PC-3 (cell line): ENCODE measurements at regions of chr11 and their contacts with region 1.

Region 1: DNA sequence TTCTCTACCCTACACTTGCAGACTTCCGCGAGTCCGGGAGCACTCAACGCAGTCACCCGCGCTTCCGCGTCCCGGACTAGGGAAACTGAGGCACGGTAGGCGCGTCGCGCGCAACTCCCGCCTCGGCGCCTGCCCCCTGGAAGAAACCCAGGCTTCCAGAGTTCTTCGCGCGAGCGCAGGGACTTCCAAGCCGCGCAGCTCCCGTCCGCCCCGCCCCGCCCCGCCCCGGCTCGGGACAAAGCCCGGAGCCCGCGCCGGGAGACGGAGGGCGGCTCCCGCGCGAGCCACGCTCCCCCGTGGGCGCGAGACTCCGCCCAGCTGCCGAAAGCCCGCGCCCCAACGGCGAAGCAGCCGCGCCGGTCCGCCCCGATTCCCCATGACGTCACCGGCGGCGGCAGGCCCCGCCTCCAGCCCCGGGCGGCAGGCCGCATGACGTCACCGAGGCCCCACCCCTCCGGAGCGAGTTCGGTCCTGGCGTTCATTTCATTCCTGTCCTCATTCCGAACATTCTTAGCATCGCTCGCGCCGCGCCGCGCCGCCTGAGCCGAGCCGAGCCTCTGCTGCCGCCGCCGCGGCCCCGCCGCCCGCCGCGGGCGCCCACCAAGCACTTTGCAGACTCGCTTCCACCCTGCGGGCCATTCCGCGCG is at the start of gene TEAD1:
- DNase-seq: peak; percentile 93
- ATAC-seq: peak; percentile 80
- H3K4me3 ChIP-seq: peak within 1 kb of the TSS; percentile 97
- H3K27ac ChIP-seq: peak within 1 kb of the TSS; percentile 63
- H3K4me1 ChIP-seq: peaks cover 32% of the 10 kb centered on the region
- H3K27me3 ChIP-seq: no peaks in the 10 kb centered on the region
- CTCF ChIP-seq: no peak
- total RNA-seq, gene TEAD1: 70.2 and 148 TPM in 2 replicates

Region 2: GRCh38 chr11:12288212-12288930 is 385.7 kb before region 1 on chr11:
- CTCF ChIA-PET with region 1: no interaction called
- POLR2A ChIA-PET with region 1: no interaction called
- intact Hi-C with region 1: loop called (anchors 5 kb)
- DNase-seq: peak; percentile 94
- ATAC-seq: peak; percentile 23
- H3K4me3 ChIP-seq: peak overlapping the region; percentile 54
- H3K27ac ChIP-seq: peak overlapping the region; percentile 99
- H3K4me1 ChIP-seq: peaks cover 54% of the 10 kb centered on the region
- H3K27me3 ChIP-seq: no peaks in the 10 kb centered on the region
- CTCF ChIP-seq: peak; percentile 92

Region 3: DNA sequence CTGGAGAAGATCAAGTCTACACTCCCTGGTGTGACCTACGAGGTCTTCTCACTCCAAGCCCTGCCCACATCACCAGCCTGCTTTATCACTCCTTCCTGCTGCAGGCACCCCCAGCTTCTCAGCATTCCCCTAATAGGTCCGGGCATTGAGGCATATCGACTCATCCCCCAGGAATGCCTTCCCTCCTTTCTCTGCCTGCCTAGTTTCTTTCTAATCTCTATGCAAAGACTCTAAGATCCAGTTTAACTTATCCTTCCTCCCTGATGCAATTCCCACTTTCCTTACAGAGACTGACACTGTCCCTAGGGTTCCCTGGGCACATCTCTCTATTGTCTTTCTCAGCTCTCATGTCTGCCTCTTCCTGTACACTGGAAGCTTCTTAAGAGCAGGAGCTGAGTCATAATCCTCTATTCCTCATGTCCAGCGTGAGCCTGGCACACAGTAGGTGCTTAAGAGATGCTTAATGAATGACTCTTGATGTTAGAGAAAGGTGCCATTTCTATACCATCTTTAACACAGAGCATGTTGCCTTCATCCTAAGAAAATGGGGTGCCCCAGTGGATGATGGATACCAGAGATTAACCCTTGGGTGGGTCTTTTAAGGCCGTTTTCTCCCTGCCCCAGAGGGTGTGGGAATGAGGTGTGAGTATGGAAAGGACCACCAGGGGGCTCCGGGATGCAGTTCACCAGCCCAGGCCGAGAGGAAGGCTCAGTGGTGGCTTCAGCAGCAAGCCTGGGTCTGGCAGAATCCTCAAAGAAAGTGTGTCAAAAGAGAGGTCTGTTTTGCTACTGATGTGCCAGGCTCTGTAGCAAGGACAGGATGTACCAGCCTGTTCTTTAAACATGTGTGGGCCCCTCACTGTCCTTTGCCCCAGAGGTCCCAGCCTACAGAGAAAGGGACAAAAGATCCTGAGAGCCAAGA is 262.0 kb before region 1 on chr11:
- CTCF ChIA-PET with region 1: no interaction called
- POLR2A ChIA-PET with region 1: no interaction called
- intact Hi-C with region 1: loop called (anchors 5 kb)
- DNase-seq: peak; percentile 79
- ATAC-seq: peak; percentile 87
- H3K4me3 ChIP-seq: no peak overlapping the region
- H3K27ac ChIP-seq: peak overlapping the region; percentile 6
- H3K4me1 ChIP-seq: peaks cover 14% of the 10 kb centered on the region
- H3K27me3 ChIP-seq: no peaks in the 10 kb centered on the region
- CTCF ChIP-seq: peak; percentile 84

Region 4: GRCh38 chr11:12599408-12600143 is 74.5 kb before region 1 on chr11:
- CTCF ChIA-PET with region 1: no interaction called
- POLR2A ChIA-PET with region 1: interaction called, 6 read pairs
- intact Hi-C with region 1: loop called (anchors 5 kb)
- DNase-seq: peak; percentile 42
- ATAC-seq: peak; percentile 48
- H3K4me3 ChIP-seq: no peak overlapping the region
- H3K27ac ChIP-seq: no peak overlapping the region
- H3K4me1 ChIP-seq: peaks cover 12% of the 10 kb centered on the region; the same call in 1 of the 2 replicates
- H3K27me3 ChIP-seq: no peaks in the 10 kb centered on the region
- CTCF ChIP-seq: peak; percentile 88

Region 5: GRCh38 chr11:12662101-12662689 is 11.9 kb before region 1 on chr11:
- CTCF ChIA-PET with region 1: no interaction called
- POLR2A ChIA-PET with region 1: no interaction called
- intact Hi-C with region 1: no loop called
- DNase-seq: no peak
- ATAC-seq: no peak
- H3K4me3 ChIP-seq: no peak overlapping the region
- H3K27ac ChIP-seq: no peak overlapping the region
- H3K4me1 ChIP-seq: no peaks in the 10 kb centered on the region
- H3K27me3 ChIP-seq: no peaks in the 10 kb centered on the region
- CTCF ChIP-seq: no peak

Region 6: GRCh38 chr11:12693479-12694181 is 19.6 kb after region 1 on chr11:
- CTCF ChIA-PET with region 1: interaction called, 3 read pairs
- POLR2A ChIA-PET with region 1: interaction called, 6 read pairs
- intact Hi-C with region 1: loop called (anchors 1 kb)
- DNase-seq: peak; percentile 96
- ATAC-seq: peak; percentile 82
- H3K4me3 ChIP-seq: peak overlapping the region; percentile 58
- H3K27ac ChIP-seq: peak overlapping the region; percentile 99
- H3K4me1 ChIP-seq: peaks cover 83% of the 10 kb centered on the region
- H3K27me3 ChIP-seq: no peaks in the 10 kb centered on the region
- CTCF ChIP-seq: no peak

Region 7: DNA sequence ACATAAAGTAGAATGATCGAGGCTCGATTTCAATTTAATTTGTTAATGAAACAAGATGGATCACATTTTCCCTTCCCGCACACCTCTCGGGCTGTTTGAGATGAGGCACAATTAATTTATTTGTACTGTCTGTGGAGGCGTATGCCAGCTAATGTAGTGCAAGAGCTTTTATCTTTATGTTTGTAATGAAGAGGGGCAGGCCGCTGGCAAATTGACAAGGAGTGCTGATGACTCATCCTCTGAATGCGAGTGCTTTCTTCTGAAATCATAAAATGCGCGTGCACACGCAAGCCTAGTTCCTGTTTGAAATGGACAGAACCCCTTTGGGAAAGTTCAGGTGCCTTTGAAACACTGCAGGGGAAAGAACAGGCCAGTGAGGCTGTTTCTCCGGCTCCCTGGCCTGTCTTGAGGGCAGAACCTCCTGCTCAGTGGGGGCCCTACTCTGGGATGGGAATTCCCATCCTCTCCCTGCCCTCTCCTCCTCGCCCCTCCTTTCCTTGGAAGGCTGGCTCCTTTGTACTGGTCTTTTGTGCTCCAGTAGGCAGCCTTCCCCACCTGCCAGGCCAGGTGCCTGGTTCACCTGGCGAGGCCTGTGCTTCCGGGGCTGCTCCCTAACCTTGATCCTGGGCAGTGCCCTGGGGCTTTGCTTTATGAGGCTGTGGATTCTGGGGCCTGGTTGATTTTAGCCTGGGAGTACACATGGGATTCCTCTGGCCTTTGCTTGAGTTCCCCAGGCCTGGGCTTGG is 50.4 kb after region 1 on chr11:
- CTCF ChIA-PET with region 1: no interaction called
- POLR2A ChIA-PET with region 1: interaction called, 5 read pairs
- intact Hi-C with region 1: loop called (anchors 1 kb)
- DNase-seq: peak; percentile 96
- ATAC-seq: peak; percentile 51
- H3K4me3 ChIP-seq: peak overlapping the region; percentile 62
- H3K27ac ChIP-seq: peak overlapping the region; percentile 99
- H3K4me1 ChIP-seq: peaks cover 91% of the 10 kb centered on the region
- H3K27me3 ChIP-seq: no peaks in the 10 kb centered on the region
- CTCF ChIP-seq: no peak

Region 8: DNA sequence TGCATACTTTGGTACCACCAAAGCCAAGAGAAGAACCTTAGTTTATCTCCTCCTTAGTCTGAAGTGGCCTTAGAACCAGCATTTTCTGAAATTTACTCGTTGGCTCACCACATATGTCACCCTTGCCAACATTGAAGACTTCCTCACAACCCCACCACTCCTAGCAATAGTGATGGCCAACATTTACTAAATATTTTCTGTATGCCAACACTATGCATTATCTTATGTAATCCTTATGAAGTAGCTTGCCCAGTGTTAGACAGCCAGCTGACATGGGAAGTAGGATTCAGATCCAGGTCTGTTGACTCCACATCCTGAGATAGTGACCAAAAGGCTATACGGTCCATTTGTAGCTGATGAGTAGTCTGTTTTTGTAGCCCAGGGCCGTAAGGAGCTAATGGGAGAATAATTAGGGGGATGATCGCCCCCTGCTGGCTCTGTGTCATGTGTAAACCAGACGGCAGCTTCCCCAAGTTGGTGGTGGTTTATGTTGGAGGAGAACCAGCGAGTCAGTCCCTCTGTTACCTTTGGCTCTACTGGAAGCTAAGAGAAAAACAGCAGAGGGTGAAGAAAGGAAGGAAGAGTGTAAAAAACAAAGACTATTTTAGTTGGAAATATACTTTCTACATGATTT is 214.6 kb after region 1 on chr11:
- CTCF ChIA-PET with region 1: no interaction called
- POLR2A ChIA-PET with region 1: no interaction called
- intact Hi-C with region 1: loop called (anchors 2 kb)
- DNase-seq: peak; percentile 82
- ATAC-seq: peak; percentile 88
- H3K4me3 ChIP-seq: no peak overlapping the region
- H3K27ac ChIP-seq: no peak overlapping the region
- H3K4me1 ChIP-seq: 0 out of 2 replicates have a peak, but pooled peaks cover 4% of the 10 kb centered on the region
- H3K27me3 ChIP-seq: no peaks in the 10 kb centered on the region
- CTCF ChIP-seq: peak; percentile 87